Endothelial cell of umbilical vein (primary cell): ENCODE measurements at regions of chr2 and their contacts with region 1.

Region 1: DNA sequence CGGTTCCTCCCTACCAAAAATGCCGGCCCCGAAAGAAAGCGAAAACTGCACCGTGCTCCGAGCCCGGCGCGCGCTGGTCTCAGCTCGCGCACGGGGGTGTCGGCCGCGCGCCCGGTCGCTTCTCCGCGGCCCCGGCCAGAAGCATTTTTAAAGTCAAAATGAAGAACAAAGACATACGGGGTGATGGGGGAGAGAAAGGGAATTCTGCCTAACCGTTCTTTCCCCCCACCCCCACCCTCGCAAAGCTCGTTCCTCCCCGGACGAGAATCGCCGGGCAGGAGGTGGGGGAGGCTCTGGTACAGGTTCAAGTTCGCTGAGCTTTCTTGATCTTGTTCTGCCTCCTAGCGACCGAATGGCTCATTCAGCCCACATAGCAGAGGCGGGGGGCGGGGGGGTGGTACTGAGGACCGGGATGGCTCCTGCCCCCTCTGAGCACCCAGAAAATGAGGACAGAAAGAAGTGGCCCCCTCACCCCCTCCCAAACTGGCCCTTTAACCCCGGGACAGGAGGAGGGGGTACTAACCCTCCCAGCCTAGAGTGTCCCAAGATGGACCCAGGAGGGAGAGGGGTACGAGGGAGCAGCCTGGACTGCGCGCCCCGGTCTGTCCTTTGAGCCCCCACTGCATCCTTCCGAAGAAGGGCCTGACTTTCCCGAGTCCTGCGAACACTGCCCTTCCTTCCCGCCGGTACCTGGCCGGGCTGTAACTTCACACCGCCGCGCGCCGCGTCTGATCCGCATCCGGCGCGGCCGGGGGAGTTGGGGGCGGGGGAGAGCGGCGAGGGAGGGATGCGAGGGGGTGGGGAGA is 3.1 kb downstream of the BCL11A start:
- DNase-seq: peak; percentile 52
- H3K4me3 ChIP-seq: peak overlapping the region; percentile 44 to 67 (median 60)
- H3K27ac ChIP-seq: no peak overlapping the region
- H3K4me1 ChIP-seq: peaks cover 22% of the 10 kb centered on the region
- H3K27me3 ChIP-seq: peaks cover 40 to 68% of the 10 kb centered on the region in 2 experiments
- CTCF ChIP-seq: peak; percentile 39 to 61
- POLR2A ChIP-seq: no peak

Region 2: DNA sequence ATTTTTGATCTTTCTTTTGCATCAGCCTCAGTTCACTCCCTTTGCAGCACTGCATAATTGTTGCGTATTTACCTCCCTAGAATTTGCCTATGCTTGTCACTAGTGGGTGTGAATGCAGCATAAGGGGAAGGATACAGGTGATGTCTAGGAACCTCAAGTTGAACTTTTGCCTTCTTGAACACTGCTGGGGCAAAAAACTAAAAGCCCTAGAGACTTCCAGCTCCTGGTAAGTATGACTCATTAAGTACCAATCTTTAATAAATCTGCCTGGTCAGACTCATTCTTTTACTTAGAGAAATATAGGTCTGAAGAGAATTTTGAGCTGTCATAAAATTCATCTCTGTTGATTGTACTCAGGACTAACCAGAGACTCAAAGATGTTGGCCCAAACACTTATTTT is 1762.0 kb before region 1 on chr2:
- CTCF ChIA-PET with region 1: no interaction called
- POLR2A ChIA-PET with region 1: no interaction called
- dilution Hi-C with region 1: no loop called
- intact Hi-C with region 1: loop called (anchors 5 kb)
- DNase-seq: no peak
- H3K4me3 ChIP-seq: no peak overlapping the region
- H3K27ac ChIP-seq: no peak overlapping the region
- H3K4me1 ChIP-seq: no peaks in the 10 kb centered on the region
- H3K27me3 ChIP-seq: no peaks in the 10 kb centered on the region
- CTCF ChIP-seq: no peak
- POLR2A ChIP-seq: no peak

Region 3: GRCh38 chr2:60456115-60456770 is 94.1 kb before region 1 on chr2:
- CTCF ChIA-PET with region 1: no interaction called
- POLR2A ChIA-PET with region 1: no interaction called
- dilution Hi-C with region 1: no loop called
- intact Hi-C with region 1: no loop called
- DNase-seq: no peak
- H3K4me3 ChIP-seq: no peak overlapping the region
- H3K27ac ChIP-seq: no peak overlapping the region
- H3K4me1 ChIP-seq: no peaks in the 10 kb centered on the region
- H3K27me3 ChIP-seq: no peaks in the 10 kb centered on the region
- CTCF ChIP-seq: no peak
- POLR2A ChIP-seq: no peak

Region 4: DNA sequence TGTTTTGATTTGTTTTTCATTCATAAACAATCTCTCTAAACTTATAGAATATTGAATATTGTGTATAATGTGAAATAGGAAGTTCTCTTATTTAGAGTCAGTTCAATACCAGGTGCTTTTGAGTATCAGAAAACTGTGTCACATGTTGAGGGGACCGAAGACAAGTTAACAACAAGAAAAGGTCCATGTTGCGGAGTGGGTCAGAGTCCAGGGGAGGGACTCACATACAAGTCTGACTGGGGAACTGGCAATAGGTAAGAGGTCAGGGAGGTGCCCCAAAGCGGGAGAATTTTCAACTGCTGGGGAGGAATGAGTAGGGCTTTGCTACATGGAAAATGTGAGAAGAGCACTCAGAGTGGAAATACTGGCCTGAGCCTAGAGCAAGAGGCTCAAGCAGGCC is 22.9 kb after region 1 on chr2:
- CTCF ChIA-PET with region 1: no interaction called
- POLR2A ChIA-PET with region 1: no interaction called
- dilution Hi-C with region 1: no loop called
- intact Hi-C with region 1: no loop called
- DNase-seq: no peak
- H3K4me3 ChIP-seq: no peak overlapping the region
- H3K27ac ChIP-seq: no peak overlapping the region
- H3K4me1 ChIP-seq: no peaks in the 10 kb centered on the region
- H3K27me3 ChIP-seq: peaks cover 19 to 38% of the 10 kb centered on the region in 2 experiments
- CTCF ChIP-seq: no peak
- POLR2A ChIP-seq: no peak